ENCODE measurements at regions of chr7 and their contacts with region 1.

Region 1: DNA sequence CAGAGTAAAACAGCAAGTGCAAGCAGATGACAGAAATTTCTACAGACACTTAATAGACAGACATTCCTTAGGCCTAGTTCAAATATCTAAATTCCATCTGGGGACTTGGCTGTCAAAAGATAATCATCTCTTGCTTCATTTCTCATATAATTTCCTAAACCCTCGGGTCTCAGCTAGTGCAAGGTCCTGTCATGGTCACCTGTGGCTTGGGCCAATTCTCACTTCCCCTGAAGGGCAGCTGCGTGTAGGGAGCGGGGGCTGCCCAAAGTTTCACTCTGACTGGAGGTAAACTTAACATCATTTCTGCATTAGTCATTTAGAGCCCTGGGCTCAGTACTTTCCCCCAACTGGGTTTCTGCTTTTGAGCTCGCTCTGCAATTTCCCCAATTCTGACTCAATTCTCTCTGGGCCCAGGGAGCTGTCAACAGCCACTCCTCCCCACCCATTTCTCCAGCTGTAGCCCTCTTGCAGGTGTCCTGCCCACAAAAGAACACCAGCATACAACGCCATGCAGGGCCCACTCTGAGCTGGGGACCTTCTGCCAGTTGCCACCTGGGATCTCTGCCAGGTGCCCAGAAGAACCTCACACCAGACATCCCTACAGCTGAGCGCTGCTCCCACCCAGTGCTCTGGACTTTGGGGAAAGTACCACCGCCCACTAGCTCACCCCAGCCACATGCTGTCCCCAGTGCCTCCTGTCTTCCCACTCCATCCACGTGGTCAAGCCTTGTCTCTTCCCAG is 38.0 kb downstream of the VOPP1 start:
- DNase-seq: no peak
- H3K4me3 ChIP-seq: no peak overlapping the region
- H3K27ac ChIP-seq: no peak overlapping the region
- H3K4me1 ChIP-seq: peaks cover 11% of the 10 kb centered on the region
- H3K27me3 ChIP-seq: no peaks in the 10 kb centered on the region
- CTCF ChIP-seq: no peak
- POLR2A ChIP-seq: no peak

Region 2: DNA sequence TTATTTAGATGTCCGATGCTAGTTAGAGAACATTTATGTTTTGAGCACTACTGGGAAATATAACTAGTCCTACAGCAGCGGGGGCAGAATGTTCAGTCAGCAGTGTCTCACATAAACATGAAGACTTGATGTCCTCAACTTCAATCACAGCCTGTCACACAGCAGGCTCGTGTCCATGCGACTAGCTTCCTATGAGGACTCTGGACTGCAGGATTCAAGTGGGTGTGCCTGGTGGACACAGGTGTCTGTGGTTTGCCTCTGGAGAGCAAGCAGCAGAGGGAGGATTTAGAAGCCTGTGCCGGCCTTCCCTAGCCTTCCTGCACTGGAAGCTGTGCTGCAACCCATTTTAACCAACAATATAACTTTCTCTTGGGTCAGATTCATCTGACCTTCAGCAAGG is 199.2 kb before region 1 on chr7:
- CTCF ChIA-PET with region 1: no interaction called
- POLR2A ChIA-PET with region 1: no interaction called
- dilution Hi-C with region 1: no loop called
- intact Hi-C with region 1: no loop called
- DNase-seq: no peak
- H3K4me3 ChIP-seq: no peak overlapping the region
- H3K27ac ChIP-seq: no peak overlapping the region
- H3K4me1 ChIP-seq: no peaks in the 10 kb centered on the region
- H3K27me3 ChIP-seq: peaks cover 4 to 17% of the 10 kb centered on the region in 2 experiments
- CTCF ChIP-seq: no peak
- POLR2A ChIP-seq: no peak

Region 3: GRCh38 chr7:55546829-55547228 is 12.5 kb after region 1 on chr7:
- CTCF ChIA-PET with region 1: interaction called, 10 read pairs
- POLR2A ChIA-PET with region 1: interaction called, 3 read pairs
- dilution Hi-C with region 1: no loop called
- intact Hi-C with region 1: no loop called
- DNase-seq: peak; percentile 83
- H3K4me3 ChIP-seq: no peak overlapping the region
- H3K27ac ChIP-seq: peak overlapping the region; percentile 58
- H3K4me1 ChIP-seq: peaks cover 34% of the 10 kb centered on the region
- H3K27me3 ChIP-seq: no peaks in the 10 kb centered on the region
- CTCF ChIP-seq: no peak
- POLR2A ChIP-seq: no peak